T-cell (primary cell): ENCODE measurements at regions of chr3 and their contacts with region 1.

Region 1: DNA sequence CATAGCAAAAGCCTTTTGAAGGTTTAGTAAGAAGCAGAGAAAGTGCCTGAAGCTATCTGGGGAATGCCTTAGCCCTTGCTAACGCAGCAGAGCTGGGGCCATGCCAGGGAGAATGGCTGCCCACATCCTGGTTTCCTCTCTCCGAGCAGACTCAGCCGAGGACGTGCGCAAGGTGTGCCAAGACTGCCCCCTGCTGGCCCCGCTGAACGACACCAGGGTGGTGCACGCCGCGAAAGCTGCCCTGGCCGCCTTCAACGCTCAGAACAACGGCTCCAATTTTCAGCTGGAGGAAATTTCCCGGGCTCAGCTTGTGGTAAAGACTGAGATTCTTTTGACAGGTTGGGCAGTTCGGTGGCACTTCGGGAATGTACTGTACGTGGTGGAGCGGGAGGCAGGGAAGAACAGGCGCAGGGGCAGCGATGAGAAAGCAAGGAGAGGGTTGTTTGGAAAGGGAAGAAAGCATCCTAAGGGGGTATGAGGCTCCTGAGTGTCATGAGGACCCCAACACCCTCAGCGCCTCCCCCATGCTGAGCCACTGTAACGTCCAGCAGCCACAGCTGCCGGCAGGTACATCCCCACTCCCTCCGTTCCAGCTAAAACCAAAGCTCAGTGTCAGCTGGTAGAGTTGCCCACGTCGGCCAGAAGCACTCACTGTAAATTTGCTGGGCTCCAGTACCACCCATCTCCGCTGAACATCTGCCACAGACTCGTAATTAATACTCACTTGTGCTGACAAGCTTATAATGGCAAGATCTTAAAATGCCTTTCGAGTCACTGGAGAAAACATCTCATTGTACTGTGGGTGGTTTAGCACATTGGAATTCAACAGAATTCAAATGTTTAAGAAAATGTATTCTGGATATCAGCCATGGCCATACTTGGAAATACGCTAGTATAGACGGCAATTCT is 4.4 kb downstream of the AHSG start:
- DNase-seq: peak; percentile 66 to 96 (median 86)
- ATAC-seq: peak; percentile 96 to 99 (median 98)
- H3K4me3 ChIP-seq: no peak overlapping the region
- H3K4me3 Mint-ChIP-seq: peak overlapping the region; percentile 51 to 68 (median 59)
- H3K27ac ChIP-seq: no peak overlapping the region
- H3K27ac Mint-ChIP-seq: peak overlapping the region; percentile 53 to 74
- H3K4me1 ChIP-seq: peaks cover 7 to 18% of the 10 kb centered on the region in 2 experiments
- H3K4me1 Mint-ChIP-seq: peaks cover 20 to 22% (median 21%) of the 10 kb centered on the region in 3 donors
- H3K27me3 ChIP-seq: peaks cover 4 to 34% of the 10 kb centered on the region in 2 experiments
- H3K27me3 Mint-ChIP-seq: peaks cover 24 to 34% of the 10 kb centered on the region in 2 donors

Region 2: GRCh38 chr3:185942907-185943759 is 674.2 kb before region 1 on chr3:
- CTCF ChIA-PET with region 1: interaction called, 10 to 15 read pairs
- POLR2A ChIA-PET with region 1: no interaction called
- DNase-seq: peak; percentile 59 to 93 (median 78)
- ATAC-seq: peak; percentile 96 to 100 (median 98)
- H3K4me3 ChIP-seq: peak overlapping the region in 1 of 2 donors; percentile 16
- H3K4me3 Mint-ChIP-seq: peak overlapping the region; percentile 27 to 45 (median 29)
- H3K27ac ChIP-seq: no peak overlapping the region
- H3K27ac Mint-ChIP-seq: peak overlapping the region in 1 of 2 donors; percentile 48
- H3K4me1 ChIP-seq: peaks cover 0 to 14% of the 10 kb centered on the region in 2 experiments
- H3K4me1 Mint-ChIP-seq: peaks cover 17 to 18% (median 17%) of the 10 kb centered on the region in 3 donors
- H3K27me3 ChIP-seq: peaks cover 0 to 4% of the 10 kb centered on the region in 2 experiments
- H3K27me3 Mint-ChIP-seq: peaks cover 0 to 4% of the 10 kb centered on the region in 2 donors

Region 3: DNA sequence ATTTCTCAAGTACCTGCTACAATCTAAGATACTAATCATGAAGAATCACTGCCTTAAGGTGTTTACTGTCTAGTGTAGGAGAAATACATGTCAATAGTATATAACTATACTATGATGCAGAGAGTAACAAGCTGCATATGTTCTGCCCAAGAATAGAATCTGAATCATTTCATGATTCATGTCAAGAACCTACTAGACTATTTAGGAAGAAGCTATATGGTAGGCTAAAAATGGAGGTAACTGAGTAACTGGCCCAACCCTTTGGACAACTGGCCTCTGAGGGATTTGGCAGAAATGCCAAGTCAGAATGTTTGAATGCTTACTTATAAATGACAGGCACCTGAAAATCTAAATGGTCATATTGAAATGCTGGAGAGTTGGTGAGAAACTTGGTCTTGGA is 195.3 kb before region 1 on chr3:
- CTCF ChIA-PET with region 1: no interaction called
- POLR2A ChIA-PET with region 1: no interaction called
- DNase-seq: no peak
- ATAC-seq: no peak
- H3K4me3 ChIP-seq: no peak overlapping the region
- H3K4me3 Mint-ChIP-seq: no peak overlapping the region
- H3K27ac ChIP-seq: no peak overlapping the region
- H3K27ac Mint-ChIP-seq: no peak overlapping the region
- H3K4me1 ChIP-seq: no peaks in the 10 kb centered on the region
- H3K4me1 Mint-ChIP-seq: no peaks in the 10 kb centered on the region
- H3K27me3 ChIP-seq: peaks cover 0 to 11% of the 10 kb centered on the region in 2 experiments
- H3K27me3 Mint-ChIP-seq: peaks cover 6 to 8% of the 10 kb centered on the region in 2 donors

Region 4: DNA sequence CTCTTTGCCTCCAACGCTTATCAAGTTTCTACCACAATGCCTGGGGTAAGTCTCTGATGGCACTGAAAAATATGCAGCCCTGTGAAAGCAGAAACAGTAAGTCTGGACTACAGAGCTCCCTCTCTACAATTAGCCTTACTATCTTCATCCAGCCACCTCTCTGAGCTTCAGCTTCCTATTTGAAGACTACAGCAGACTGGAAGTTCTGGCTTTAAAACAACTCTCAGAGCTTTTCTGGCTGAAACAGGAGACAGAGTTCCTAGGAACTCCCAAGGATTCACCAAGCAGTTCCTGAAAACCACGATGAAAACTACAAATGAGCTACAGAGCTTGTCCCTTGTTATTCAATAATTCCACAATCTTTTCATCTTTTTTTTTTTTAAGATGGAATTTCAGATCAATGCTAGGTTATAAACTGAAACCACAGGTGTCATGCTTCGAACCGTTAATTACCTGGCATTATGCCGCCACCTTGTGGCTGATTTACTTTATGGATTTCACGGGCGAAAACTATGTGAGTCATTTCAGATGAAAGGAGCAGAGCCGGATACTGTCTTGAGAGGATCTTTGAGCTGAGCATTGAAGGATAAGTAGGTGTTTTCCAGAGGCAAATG is 77.0 kb before region 1 on chr3:
- CTCF ChIA-PET with region 1: interaction called, 11 to 21 read pairs
- POLR2A ChIA-PET with region 1: no interaction called
- DNase-seq: peak; percentile 60 to 93 (median 79)
- ATAC-seq: peak; percentile 86 to 97 (median 95)
- H3K4me3 ChIP-seq: no peak overlapping the region
- H3K4me3 Mint-ChIP-seq: no peak overlapping the region
- H3K27ac ChIP-seq: no peak overlapping the region
- H3K27ac Mint-ChIP-seq: peak overlapping the region; percentile 4 to 68
- H3K4me1 ChIP-seq: peaks cover 3 to 6% of the 10 kb centered on the region in 2 experiments
- H3K4me1 Mint-ChIP-seq: peaks cover 9 to 15% (median 9%) of the 10 kb centered on the region in 3 donors
- H3K27me3 ChIP-seq: no peaks in the 10 kb centered on the region
- H3K27me3 Mint-ChIP-seq: no peaks in the 10 kb centered on the region

Region 5: DNA sequence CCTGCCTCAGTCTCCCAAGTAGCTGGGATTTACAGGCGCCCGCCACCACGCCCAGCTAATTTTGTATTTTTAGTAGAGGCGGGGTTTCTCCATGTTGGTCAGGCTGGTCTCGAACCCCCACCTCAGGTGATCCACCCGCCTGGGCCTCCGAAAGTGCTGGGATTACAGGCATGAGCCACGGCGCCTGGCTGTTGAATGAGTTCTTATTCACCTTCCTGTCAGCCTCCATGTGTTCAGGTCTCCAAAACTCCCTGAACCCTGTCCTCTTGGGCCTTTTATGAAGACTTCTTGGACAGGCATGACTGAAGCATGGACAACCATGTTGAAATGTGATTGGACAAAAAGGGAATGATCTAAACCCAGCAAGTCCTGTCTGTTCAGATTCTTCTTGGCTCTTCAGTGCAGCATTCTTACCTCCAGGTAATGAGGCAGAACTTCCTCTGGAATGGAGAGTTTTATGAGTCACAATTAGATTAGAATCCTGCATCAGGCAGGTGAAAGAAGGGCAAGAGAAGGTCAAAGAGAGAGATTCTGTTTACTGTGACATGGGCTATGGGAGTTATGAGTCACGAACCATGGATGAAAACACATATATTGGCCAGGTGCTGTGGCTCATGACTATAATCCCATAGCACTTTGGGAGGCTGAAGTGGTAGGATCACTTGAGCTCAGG is 143.0 kb after region 1 on chr3:
- CTCF ChIA-PET with region 1: interaction called in 1 of 2 experiments, 10 read pairs
- POLR2A ChIA-PET with region 1: no interaction called
- DNase-seq: no peak
- ATAC-seq: no peak
- H3K4me3 ChIP-seq: no peak overlapping the region
- H3K4me3 Mint-ChIP-seq: no peak overlapping the region
- H3K27ac ChIP-seq: no peak overlapping the region
- H3K27ac Mint-ChIP-seq: no peak overlapping the region
- H3K4me1 ChIP-seq: no peaks in the 10 kb centered on the region
- H3K4me1 Mint-ChIP-seq: no peaks in the 10 kb centered on the region
- H3K27me3 ChIP-seq: peaks cover 0 to 3% of the 10 kb centered on the region in 2 experiments
- H3K27me3 Mint-ChIP-seq: no peaks in the 10 kb centered on the region

Region 6: DNA sequence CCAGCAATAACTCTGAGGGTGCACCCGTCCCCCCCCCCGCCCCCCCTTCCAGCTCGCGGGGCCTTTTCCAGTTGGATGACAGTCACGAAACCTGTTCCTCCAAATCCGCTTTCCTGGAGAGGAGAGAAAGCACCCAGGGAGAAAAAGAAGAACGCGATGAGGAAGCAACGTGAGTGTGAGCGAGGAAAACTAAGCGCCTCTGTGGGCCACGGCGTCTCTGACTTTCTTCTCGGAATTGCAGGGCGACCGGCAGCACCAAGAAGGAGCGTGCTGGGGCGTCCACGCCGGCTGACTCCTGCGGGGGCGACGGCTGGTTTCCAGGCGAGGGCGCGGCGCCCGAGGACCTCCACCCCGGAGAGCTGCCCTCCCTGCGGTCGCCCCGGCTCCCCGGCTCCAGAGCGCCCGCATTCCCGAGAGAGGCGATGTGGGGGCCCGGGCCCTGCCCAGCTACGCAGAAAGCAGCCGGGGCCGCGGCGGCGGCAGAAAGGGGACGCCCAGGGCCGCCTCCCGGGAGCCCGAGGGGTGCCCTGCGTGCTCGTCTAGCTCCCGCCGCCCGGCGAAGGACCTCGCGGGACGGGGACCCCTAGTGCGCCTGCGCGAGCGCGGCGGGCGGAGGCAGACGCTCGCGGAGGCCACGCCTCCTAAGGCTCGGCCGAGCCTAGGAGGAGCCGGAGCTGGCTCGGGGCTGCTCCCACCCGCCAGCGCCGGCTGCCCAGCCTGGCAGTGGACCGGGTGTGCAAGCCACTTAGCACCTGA is 209.9 kb after region 1 on chr3:
- CTCF ChIA-PET with region 1: interaction called, 9 to 12 read pairs
- POLR2A ChIA-PET with region 1: no interaction called
- DNase-seq: peak; percentile 63 to 93 (median 79)
- ATAC-seq: peak; percentile 93 to 95 (median 94)
- H3K4me3 ChIP-seq: peak overlapping the region; percentile 57 to 82
- H3K4me3 Mint-ChIP-seq: peak overlapping the region; percentile 67 to 73 (median 70)
- H3K27ac ChIP-seq: no peak overlapping the region
- H3K27ac Mint-ChIP-seq: no peak overlapping the region
- H3K4me1 ChIP-seq: peaks cover 5 to 30% of the 10 kb centered on the region in 2 experiments
- H3K4me1 Mint-ChIP-seq: peaks cover 15 to 24% (median 22%) of the 10 kb centered on the region in 3 donors
- H3K27me3 ChIP-seq: peaks cover 13 to 53% of the 10 kb centered on the region in 2 experiments
- H3K27me3 Mint-ChIP-seq: peaks cover 50 to 57% of the 10 kb centered on the region in 2 donors

Region 7: DNA sequence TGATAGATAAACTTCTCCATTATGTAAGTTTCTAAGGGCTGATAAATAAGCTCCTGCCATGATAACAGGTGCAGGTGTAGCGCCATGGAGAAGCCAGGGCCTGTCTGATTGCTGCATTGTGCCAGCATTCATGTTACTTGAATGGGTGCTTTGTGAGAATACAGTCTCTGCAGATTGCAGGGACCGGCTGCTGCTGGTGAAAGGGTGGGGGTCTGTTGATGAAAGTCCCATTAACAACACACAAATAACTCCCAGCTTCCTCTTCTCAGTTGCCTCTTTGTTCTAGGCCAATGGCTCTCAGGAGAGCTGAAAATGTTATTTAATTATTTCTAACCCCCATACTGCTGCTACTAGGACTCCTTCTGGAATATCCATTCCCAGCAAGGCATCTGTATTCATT is 828.1 kb after region 1 on chr3:
- CTCF ChIA-PET with region 1: no interaction called
- POLR2A ChIA-PET with region 1: no interaction called
- DNase-seq: no peak
- ATAC-seq: no peak
- H3K4me3 ChIP-seq: no peak overlapping the region
- H3K4me3 Mint-ChIP-seq: no peak overlapping the region
- H3K27ac ChIP-seq: no peak overlapping the region
- H3K27ac Mint-ChIP-seq: no peak overlapping the region
- H3K4me1 ChIP-seq: no peaks in the 10 kb centered on the region
- H3K4me1 Mint-ChIP-seq: no peaks in the 10 kb centered on the region
- H3K27me3 ChIP-seq: no peaks in the 10 kb centered on the region
- H3K27me3 Mint-ChIP-seq: peaks cover 2 to 8% of the 10 kb centered on the region in 2 donors